ENCODE measurements at regions of chr13 and their contacts with region 1.

Region 1: GRCh38 chr13:41905600-41906254 is 55.2 kb downstream of the VWA8 start:
- DNase-seq: peak in 2 of 9 experiments; percentile 46 to 61
- ATAC-seq: peak; percentile 98
- H3K4me3 ChIP-seq: no peak overlapping the region
- H3K4me3 Mint-ChIP-seq: no peak overlapping the region
- H3K27ac ChIP-seq: no peak overlapping the region
- H3K27ac Mint-ChIP-seq: no peak overlapping the region
- H3K4me1 ChIP-seq: no peaks in the 10 kb centered on the region
- H3K4me1 Mint-ChIP-seq: peaks cover 5% of the 10 kb centered on the region
- H3K27me3 ChIP-seq: no peaks in the 10 kb centered on the region
- H3K27me3 Mint-ChIP-seq: no peaks in the 10 kb centered on the region
- CTCF ChIP-seq: peak; percentile 76

Region 2: DNA sequence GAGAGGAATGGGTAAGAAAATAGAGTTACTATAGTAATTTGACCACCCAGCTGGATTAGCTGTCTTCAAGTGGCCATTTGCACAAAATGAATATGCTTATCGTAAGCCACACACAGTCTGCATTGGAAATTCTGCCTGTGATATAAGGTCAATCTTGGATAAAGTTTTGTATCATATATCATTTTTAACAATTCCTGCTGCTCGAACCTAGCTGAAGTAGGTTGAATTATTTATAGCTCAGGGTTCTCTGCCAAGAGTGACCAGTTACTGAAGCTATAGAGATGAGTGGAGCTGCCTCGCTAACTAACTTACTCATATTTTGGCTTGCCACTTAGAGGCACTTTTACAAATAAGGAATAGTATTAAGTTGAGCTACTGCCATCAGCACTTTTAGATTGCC is 227.5 kb before region 1 on chr13:
- CTCF ChIA-PET with region 1: no interaction called
- POLR2A ChIA-PET with region 1: no interaction called
- intact Hi-C with region 1: loop called in 1 of 2 experiments (anchors 10 kb)
- DNase-seq: no peak
- ATAC-seq: no peak
- H3K4me3 ChIP-seq: no peak overlapping the region
- H3K4me3 Mint-ChIP-seq: no peak overlapping the region
- H3K27ac ChIP-seq: no peak overlapping the region
- H3K27ac Mint-ChIP-seq: no peak overlapping the region
- H3K4me1 ChIP-seq: peaks cover 8% of the 10 kb centered on the region
- H3K4me1 Mint-ChIP-seq: peaks cover 18% of the 10 kb centered on the region
- H3K27me3 ChIP-seq: no peaks in the 10 kb centered on the region
- H3K27me3 Mint-ChIP-seq: no peaks in the 10 kb centered on the region
- CTCF ChIP-seq: no peak

Measured in CD8-positive, alpha-beta T cell (primary cell).